Ascending aorta (tissue), 2 donors: ENCODE measurements at regions of chr3 and their contacts with region 1.

Region 1: GRCh38 chr3:43621656-43622432 is at the start of gene ANO10:
- DNase-seq: peak; percentile 97 to 99
- H3K4me3 ChIP-seq: peak within 1 kb of the TSS; percentile 60 to 97
- H3K27ac ChIP-seq: peak within 1 kb of the TSS; percentile 88 to 92
- H3K4me1 ChIP-seq: peaks cover 0 to 10% of the 10 kb centered on the region in 2 donors
- H3K27me3 ChIP-seq: no peaks in the 10 kb centered on the region
- CTCF ChIP-seq: no peak
- total RNA-seq, gene ANO10: 24.9 TPM

Region 2: GRCh38 chr3:43001094-43001553 is 620.7 kb before region 1 on chr3:
- intact Hi-C with region 1: loop called (anchors 5 kb)
- DNase-seq: peak; percentile 69 to 94
- H3K4me3 ChIP-seq: peak overlapping the region in 1 of 2 donors; percentile 29
- H3K27ac ChIP-seq: peak overlapping the region; percentile 50 to 86
- H3K4me1 ChIP-seq: peaks cover 20 to 23% of the 10 kb centered on the region in 2 donors
- H3K27me3 ChIP-seq: no peaks in the 10 kb centered on the region
- CTCF ChIP-seq: no peak

Region 3: DNA sequence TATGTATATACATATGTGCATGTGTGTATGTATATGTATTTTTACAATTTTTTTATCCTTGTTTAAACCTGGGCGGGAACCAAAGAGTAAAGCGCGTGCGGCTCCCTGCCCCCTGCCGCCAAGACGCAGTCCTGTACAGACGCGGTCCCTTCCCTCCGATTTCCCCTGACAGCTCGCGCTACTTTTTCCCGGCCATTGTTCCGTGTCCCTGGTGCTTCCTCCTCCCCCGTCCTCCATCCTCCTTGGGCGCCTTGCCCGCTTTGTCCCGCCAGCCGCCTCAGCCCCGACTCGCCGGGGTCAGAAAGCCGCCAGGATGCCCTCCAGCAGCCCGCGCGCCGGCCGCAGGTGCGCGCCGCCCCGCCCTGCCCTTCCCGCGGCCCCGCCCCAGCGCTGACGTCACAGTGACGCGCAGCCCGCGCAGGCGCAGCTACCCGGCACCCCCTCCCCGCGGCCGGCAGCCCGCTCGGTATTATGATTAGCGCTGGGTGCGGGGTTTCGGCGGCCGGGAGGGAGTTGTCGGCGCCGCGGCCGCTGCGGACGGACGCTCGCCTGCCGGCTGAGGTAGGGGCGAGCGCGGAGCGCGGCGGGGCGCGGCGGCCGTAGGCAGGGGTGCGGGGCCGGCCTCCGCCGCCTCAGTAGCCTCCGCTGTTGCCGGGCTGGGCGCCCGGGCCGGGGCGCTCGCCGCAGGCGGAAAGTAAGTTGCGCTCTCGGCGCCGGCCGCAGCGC is 335.6 kb before region 1 on chr3 and contains the start of gene SNRK:
- intact Hi-C with region 1: loop called (anchors 2 kb)
- DNase-seq: peak; percentile 20 to 91
- H3K4me3 ChIP-seq: peak within 1 kb of the TSS; percentile 79 to 86
- H3K27ac ChIP-seq: peak within 1 kb of the TSS; percentile 58 to 84
- H3K4me1 ChIP-seq: peaks cover 0 to 12% of the 10 kb centered on the region in 2 donors
- H3K27me3 ChIP-seq: no peaks in the 10 kb centered on the region
- CTCF ChIP-seq: peak in 2 of 3 experiments; percentile 8 to 31
- total RNA-seq, gene SNRK: 44.3 TPM

Region 4: DNA sequence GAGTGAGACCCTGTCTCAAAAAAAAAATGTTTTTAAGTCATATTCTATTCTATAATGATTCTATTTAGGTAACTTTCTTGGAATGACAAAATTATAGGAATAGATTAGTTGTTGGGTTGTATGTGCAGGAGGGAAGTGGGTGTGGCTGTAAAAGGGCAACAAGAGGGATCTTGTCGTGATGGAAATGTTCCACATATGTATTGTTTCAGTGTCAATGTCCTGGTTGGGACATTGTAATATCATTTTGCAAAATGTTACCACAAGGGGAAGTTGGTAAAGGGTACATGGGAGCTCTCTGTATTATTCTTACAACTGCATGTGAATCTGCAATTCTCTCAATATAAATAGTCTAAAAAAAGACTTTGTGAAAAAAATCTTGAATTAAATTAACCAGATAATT is 54.6 kb after region 1 on chr3:
- intact Hi-C with region 1: no loop called
- DNase-seq: no peak
- H3K4me3 ChIP-seq: no peak overlapping the region
- H3K27ac ChIP-seq: no peak overlapping the region
- H3K4me1 ChIP-seq: no peaks in the 10 kb centered on the region
- H3K27me3 ChIP-seq: no peaks in the 10 kb centered on the region
- CTCF ChIP-seq: no peak

Region 5: GRCh38 chr3:43690400-43691119 is 68.7 kb after region 1 on chr3 and contains the start of gene ABHD5:
- intact Hi-C with region 1: loop called (anchors 1 kb)
- DNase-seq: peak; percentile 55 to 92
- H3K4me3 ChIP-seq: peak within 1 kb of the TSS; percentile 81 to 96
- H3K27ac ChIP-seq: peak within 1 kb of the TSS; percentile 89 to 94
- H3K4me1 ChIP-seq: peaks cover 0 to 11% of the 10 kb centered on the region in 2 donors
- H3K27me3 ChIP-seq: no peaks in the 10 kb centered on the region
- CTCF ChIP-seq: peak in 1 of 3 experiments; percentile 28
- total RNA-seq, gene ABHD5: 5.3 TPM

Region 6: DNA sequence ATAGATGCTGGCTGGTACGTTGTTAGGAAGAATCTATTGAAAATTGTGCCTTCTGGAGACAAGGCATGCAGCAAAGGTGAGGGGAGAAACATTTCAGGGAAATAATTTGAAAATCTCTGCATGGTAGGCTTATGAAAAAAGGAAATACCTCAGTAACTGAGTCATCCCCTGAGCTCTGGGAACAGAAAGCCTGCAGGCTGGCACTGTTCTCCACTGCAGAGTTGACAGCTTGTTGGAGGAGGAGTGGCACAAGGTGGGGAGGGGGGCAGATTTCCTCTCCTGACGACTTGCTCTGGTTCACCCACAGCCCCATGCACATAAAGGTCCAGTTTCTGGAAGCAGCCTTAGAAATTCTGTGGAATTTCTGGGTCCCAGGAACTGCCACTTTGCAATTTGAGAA is 248.3 kb after region 1 on chr3:
- intact Hi-C with region 1: loop called (anchors 5 kb)
- DNase-seq: peak in 1 of 2 donors; percentile 78
- H3K4me3 ChIP-seq: no peak overlapping the region
- H3K27ac ChIP-seq: peak overlapping the region; percentile 79 to 85
- H3K4me1 ChIP-seq: peaks cover 11 to 37% of the 10 kb centered on the region in 2 donors
- H3K27me3 ChIP-seq: no peaks in the 10 kb centered on the region
- CTCF ChIP-seq: no peak